Right lobe of liver (tissue), 6 donors: ENCODE measurements at regions of chr5 and their contacts with region 1.

Region 1: DNA sequence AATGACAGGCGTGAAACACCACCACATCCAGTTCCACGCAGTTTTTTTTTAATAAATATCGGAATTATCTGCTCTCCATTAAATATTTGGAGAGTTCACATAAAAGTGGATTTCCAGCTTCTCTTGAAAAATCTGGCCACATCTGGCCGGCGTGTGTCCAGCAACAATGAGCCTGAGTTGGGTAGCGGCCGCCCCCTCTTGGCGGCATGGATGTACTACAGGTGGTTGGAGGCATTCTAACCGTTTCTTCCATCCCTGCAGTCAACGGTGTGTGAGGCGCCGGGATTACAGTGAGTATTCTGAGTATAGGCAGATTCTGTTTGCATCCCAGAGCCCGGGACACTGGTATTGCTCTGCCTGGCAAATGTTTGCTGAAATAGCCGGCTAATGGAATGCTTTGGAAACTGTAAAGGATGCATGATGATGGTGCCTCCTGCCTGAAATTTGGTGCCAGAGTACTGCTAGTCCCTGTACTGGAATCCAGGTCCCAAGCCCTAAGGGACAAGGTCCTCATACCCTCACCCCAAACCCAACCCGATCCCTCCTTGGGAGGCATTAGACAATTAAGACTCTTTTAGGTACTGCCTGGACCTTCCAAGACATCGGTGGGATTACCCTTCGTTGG is 13.6 kb upstream of the GM2A start:
- DNase-seq: peak; percentile 73 to 81 (median 79)
- ATAC-seq: peak; percentile 71 to 91 (median 86)
- H3K4me3 ChIP-seq: no peak overlapping the region
- H3K27ac ChIP-seq: no peak overlapping the region
- H3K4me1 ChIP-seq: peaks cover 0 to 9% (median 3%) of the 10 kb centered on the region in 4 donors
- H3K27me3 ChIP-seq: no peaks in the 10 kb centered on the region
- CTCF ChIP-seq: peak; percentile 72 to 94 (median 88)
- POLR2A ChIP-seq: no peak

Region 2: GRCh38 chr5:151126199-151126645 is 113.1 kb before region 1 on chr5:
- intact Hi-C with region 1: loop called (anchors 5 to 10 kb)
- DNase-seq: peak; percentile 81 to 85 (median 83)
- ATAC-seq: peak; percentile 86 to 93 (median 88)
- H3K4me3 ChIP-seq: no peak overlapping the region
- H3K27ac ChIP-seq: no peak overlapping the region
- H3K4me1 ChIP-seq: peaks cover 0 to 8% (median 0%) of the 10 kb centered on the region in 4 donors
- H3K27me3 ChIP-seq: no peaks in the 10 kb centered on the region
- CTCF ChIP-seq: peak; percentile 81 to 89 (median 84)
- POLR2A ChIP-seq: no peak